K562 (cell line): ENCODE measurements at regions of chr1 and their contacts with region 1.

Region 1: GRCh38 chr1:235415008-235415904 is 48.0 kb downstream of the TBCE start:
- DNase-seq: peak; percentile 73 to 84 (median 76)
- ATAC-seq: peak; percentile 95
- H3K4me3 ChIP-seq: no peak overlapping the region
- H3K27ac ChIP-seq: no peak overlapping the region
- H3K4me1 ChIP-seq: peaks cover 0 to 2% of the 10 kb centered on the region in 2 experiments; a peak in 3 of 5 replicates
- H3K27me3 ChIP-seq: no peaks in the 10 kb centered on the region
- CTCF ChIP-seq: peak; percentile 90 to 96 (median 93)
- EP300 ChIP-seq: no peak
- POLR2A ChIP-seq: no peak
- RAD21 ChIP-seq: peak; percentile 73 to 84

Region 2: GRCh38 chr1:235199441-235199840 is 215.8 kb before region 1 on chr1:
- CTCF ChIA-PET with region 1: interaction called, 12 read pairs
- POLR2A ChIA-PET with region 1: interaction called, 3 read pairs
- in situ Hi-C with region 1: no loop called
- intact Hi-C with region 1: loop called (anchors 1 kb)
- DNase-seq: peak in 2 of 4 experiments; percentile 30 to 46
- ATAC-seq: peak; percentile 86
- H3K4me3 ChIP-seq: no peak overlapping the region
- H3K27ac ChIP-seq: no peak overlapping the region
- H3K4me1 ChIP-seq: no peaks in the 10 kb centered on the region
- H3K27me3 ChIP-seq: no peaks in the 10 kb centered on the region
- CTCF ChIP-seq: peak; percentile 46 to 56 (median 54); a peak in 5 of 6 replicates
- EP300 ChIP-seq: no peak
- POLR2A ChIP-seq: no peak
- RAD21 ChIP-seq: peak in 1 of 2 experiments; percentile 56; a peak in 2 of 4 replicates

Region 3: DNA sequence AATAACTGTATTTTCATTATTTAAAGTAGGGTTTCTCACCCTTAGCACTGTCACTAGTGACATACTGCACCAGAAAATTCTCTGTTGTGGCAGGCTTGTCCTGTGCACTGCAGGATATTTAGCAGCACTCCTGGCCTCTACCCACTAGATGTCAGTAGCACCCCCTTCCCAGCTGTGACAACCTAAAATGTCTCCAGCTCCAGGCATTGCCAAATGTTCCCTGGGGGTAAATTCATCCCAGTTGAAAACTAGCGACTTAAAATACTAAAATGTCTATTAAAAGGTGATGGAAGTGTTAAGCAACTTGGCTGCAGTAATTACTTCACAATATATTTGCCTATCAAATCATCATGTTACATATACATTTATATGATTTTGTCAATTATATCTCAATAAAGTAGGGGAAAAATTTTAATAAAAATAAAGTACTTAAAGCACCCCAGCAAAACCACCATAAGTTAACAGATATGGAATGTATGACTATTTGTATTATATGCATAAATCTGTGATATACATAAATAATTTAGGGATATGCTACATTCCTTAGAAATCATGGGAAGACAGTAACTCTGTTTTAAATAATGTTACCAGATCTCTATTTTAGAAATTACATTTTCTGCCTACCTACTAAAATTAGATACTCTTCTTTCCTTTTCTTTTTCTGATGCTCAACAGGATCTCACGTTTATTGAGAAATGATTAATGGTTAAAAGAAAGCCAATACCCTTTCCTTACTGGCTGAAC is 161.9 kb before region 1 on chr1:
- CTCF ChIA-PET with region 1: interaction called, 50 read pairs
- POLR2A ChIA-PET with region 1: no interaction called
- in situ Hi-C with region 1: loop called (anchors 5 kb)
- intact Hi-C with region 1: loop called (anchors 1 kb)
- DNase-seq: peak; percentile 23 to 83 (median 44)
- ATAC-seq: peak; percentile 100
- H3K4me3 ChIP-seq: no peak overlapping the region
- H3K27ac ChIP-seq: no peak overlapping the region
- H3K4me1 ChIP-seq: no peaks in the 10 kb centered on the region
- H3K27me3 ChIP-seq: no peaks in the 10 kb centered on the region
- CTCF ChIP-seq: peak; percentile 92 to 96 (median 93)
- EP300 ChIP-seq: no peak
- POLR2A ChIP-seq: no peak
- RAD21 ChIP-seq: peak; percentile 90 to 96

Region 4: DNA sequence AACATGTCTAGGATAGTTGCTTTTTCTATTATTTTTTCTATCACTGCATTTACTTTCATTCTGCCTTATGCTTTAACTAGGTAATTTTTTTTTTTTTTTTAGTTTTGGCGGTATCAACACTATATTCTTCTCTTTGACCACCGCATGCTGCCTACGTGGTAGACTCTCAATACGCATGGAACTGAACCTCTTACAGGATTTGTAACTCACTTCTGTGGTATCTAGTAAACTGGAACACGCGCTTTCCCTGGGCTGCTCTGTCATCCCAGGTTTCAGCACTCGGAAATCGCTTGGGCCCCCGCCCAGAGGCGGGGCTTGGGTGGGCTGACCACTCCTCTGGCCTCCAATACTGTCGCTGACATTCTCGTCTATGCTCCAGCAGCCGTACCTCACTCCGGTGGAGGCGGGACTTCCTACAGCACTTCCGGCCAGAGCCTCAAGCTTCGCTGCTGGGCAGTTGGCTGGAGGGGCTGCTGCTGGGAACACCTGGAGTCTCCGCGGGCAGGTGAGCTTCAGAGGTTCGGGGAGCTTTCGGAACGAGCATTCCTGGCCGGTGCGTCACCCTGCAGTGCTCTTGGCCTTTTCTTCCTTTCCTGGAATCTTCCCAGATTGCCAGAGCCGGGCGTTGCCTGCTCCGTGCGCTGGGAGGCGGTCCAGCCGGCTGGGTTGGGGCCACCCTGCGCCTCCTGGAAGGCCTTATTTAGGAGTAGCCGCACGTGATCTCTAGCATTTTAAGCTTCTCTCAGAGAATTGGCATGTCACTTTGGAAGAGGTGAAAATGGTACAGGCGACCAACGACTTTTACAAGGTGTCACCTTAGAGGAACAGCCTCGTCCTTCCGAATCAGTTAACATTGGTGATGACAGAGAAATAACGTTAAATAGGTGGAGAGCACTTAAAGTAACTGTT is 48.0 kb before region 1 on chr1 and contains the start of gene TBCE:
- CTCF ChIA-PET with region 1: interaction called, 3 read pairs
- POLR2A ChIA-PET with region 1: no interaction called
- in situ Hi-C with region 1: no loop called
- intact Hi-C with region 1: loop called (anchors 2 kb)
- DNase-seq: peak; percentile 98 to 100 (median 98)
- ATAC-seq: peak; percentile 98
- H3K4me3 ChIP-seq: peak within 1 kb of the TSS; percentile 56
- H3K27ac ChIP-seq: peak within 1 kb of the TSS; percentile 69
- H3K4me1 ChIP-seq: peaks cover 9 to 16% of the 10 kb centered on the region in 2 experiments; a peak in 4 of 5 replicates
- H3K27me3 ChIP-seq: no peaks in the 10 kb centered on the region
- CTCF ChIP-seq: peak in 1 of 3 experiments; percentile 34; a peak in 1 of 6 replicates
- EP300 ChIP-seq: peak; percentile 36
- POLR2A ChIP-seq: peak; percentile 99
- RAD21 ChIP-seq: no peak; a peak in 1 of 4 replicates
- polyA plus RNA-seq, gene TBCE: 59.0 to 89.8 TPM

Region 5: GRCh38 chr1:235397733-235398132 is 17.5 kb before region 1 on chr1:
- CTCF ChIA-PET with region 1: no interaction called
- POLR2A ChIA-PET with region 1: no interaction called
- in situ Hi-C with region 1: no loop called
- intact Hi-C with region 1: no loop called
- DNase-seq: no peak
- ATAC-seq: no peak
- H3K4me3 ChIP-seq: no peak overlapping the region
- H3K27ac ChIP-seq: no peak overlapping the region
- H3K4me1 ChIP-seq: peaks cover 3 to 7% of the 10 kb centered on the region in 2 experiments; a peak in 1 of 5 replicates
- H3K27me3 ChIP-seq: no peaks in the 10 kb centered on the region
- CTCF ChIP-seq: no peak
- EP300 ChIP-seq: no peak
- POLR2A ChIP-seq: no peak
- RAD21 ChIP-seq: no peak

Region 6: DNA sequence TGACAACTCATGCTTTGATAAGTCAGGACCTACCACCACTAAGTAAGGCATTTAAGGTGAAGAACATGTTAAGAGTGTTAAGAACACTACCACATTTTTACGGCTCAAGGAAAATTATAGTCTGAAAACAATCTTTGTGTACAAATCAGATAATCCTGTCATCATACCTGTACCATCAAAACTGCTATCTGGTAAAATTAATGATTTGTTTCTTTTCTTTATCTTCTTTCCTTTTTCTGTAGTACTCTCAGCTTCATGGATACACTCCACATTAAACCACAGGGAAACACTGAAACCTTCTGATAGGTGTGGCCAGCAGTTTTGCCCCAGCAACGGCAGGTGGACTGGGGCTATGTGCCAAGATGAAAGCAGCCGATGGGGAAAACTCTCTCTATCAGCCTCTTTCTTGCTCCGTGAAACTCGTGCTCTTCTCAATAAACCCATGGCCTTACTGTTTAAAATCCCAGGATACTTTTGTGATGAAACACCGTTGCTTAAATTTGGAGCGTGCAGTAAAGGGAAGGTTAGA is 376.3 kb after region 1 on chr1:
- CTCF ChIA-PET with region 1: no interaction called
- POLR2A ChIA-PET with region 1: no interaction called
- in situ Hi-C with region 1: no loop called
- intact Hi-C with region 1: no loop called
- DNase-seq: no peak
- ATAC-seq: no peak
- H3K4me3 ChIP-seq: no peak overlapping the region
- H3K27ac ChIP-seq: no peak overlapping the region
- H3K4me1 ChIP-seq: no peaks in the 10 kb centered on the region
- H3K27me3 ChIP-seq: peaks cover 4 to 6% of the 10 kb centered on the region in 2 experiments; a peak in 2 of 5 replicates
- CTCF ChIP-seq: no peak
- EP300 ChIP-seq: no peak
- POLR2A ChIP-seq: no peak
- RAD21 ChIP-seq: no peak